Dendritic cell treated with granulocyte-macrophage colony-stimulating factor and Interleukin-4, amounts not matched to agents 40 ng/mL and 50 ng/mL, for 4 days (primary cell): ENCODE measurements at regions of chr6 and their contacts with region 1.

Region 1: GRCh38 chr6:27518881-27519795 is 46.2 kb upstream of the ZNF184 start:
- H3K4me3 Mint-ChIP-seq: peak overlapping the region; percentile 82
- H3K27ac Mint-ChIP-seq: peak overlapping the region; percentile 81
- H3K4me1 Mint-ChIP-seq: no peaks in the 10 kb centered on the region
- H3K27me3 Mint-ChIP-seq: peaks cover 33% of the 10 kb centered on the region

Region 2: DNA sequence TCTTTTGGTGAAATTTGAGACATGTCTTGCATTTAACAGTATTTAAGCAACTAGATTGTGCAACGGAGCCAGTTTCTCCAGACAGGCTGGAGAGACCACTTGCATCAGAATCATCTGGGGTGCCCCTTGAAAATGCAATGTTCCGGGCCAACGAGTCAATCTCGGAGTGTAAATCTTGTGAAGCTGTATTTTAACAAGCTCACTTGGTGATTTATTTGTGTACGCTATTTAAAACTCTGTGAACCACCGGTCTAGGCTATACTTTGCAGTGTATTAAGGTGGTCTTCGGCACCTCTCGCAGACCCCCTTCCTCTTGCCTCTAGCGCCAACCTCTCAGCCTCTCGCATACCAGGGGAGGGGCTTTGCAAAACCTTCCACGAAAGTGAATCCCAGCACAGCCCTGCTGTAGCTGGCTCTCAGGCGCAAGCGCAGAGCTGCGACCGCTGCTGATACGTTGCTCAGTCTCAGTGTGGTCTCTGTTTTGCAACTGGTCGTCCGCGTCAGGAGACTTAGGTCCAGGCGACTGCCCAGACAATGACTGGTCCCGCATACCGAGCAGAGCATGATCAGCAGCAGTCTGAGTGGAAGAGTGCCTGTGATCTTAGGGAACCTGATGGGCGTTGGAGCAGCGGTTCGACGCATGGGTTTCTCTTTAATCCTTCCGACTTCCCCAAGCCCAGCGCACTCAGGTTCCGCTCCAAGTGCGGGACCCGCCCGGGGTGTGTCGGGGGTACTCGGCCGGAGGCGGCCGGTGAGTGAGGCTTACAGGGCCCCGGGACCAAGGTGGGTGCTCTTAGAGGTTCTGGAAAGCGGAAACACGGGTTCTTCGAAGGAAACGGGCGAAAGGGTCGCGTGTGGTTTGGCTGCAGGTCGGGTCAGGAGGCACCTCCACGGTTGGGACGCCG is 130.6 kb before region 1 on chr6 and contains the start of gene ZNF391:
- intact Hi-C with region 1: no loop called
- H3K4me3 Mint-ChIP-seq: peak within 1 kb of the TSS; percentile 98
- H3K27ac Mint-ChIP-seq: peak within 1 kb of the TSS; percentile 86
- H3K4me1 Mint-ChIP-seq: peaks cover 13% of the 10 kb centered on the region
- H3K27me3 Mint-ChIP-seq: peaks cover 15% of the 10 kb centered on the region

Region 3: DNA sequence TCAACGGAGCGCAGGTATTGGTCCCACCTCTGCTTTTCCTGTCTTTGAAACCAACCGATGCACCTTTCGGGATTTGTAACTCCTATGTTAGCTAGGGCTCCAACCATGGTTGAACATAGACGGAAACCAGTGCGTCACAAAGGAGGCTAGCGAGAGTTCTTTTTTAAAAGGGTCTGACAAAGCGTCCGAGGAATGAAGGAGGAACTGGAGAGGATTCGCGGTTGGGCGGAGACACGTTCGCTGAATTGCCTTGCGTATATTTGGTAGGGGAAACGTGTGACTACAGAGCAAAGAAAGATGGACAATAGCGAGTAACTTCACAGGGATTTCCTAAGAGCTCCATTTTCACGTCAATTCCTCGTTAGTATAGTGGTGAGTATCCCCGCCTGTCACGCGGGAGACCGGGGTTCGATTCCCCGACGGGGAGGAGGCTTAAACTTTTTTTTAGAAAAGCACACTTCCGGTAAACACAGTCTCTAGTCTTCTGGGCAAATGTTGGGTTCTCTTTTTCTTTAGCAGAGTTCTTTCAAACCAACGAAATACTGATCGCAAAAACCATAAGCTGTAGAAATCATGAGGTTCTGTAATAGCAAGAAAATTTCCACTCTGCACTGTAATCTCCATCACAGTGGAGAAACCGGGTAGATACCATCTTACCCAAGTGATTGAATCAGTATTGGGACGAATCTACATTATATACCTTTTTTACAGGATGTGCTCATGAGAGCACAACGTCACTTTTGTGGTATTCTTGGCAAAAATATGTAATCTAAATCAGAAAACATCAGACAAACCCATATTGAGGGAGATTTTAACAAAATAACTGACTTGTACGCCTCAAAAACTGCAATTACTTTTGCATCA is 39.6 kb before region 1 on chr6:
- intact Hi-C with region 1: loop called (anchors 2 kb)
- H3K4me3 Mint-ChIP-seq: no peak overlapping the region
- H3K27ac Mint-ChIP-seq: no peak overlapping the region
- H3K4me1 Mint-ChIP-seq: no peaks in the 10 kb centered on the region
- H3K27me3 Mint-ChIP-seq: peaks cover 6% of the 10 kb centered on the region

Region 4: GRCh38 chr6:27795697-27796494 is 276.8 kb after region 1 on chr6:
- intact Hi-C with region 1: loop called (anchors 1 kb)
- H3K4me3 Mint-ChIP-seq: no peak overlapping the region
- H3K27ac Mint-ChIP-seq: no peak overlapping the region
- H3K4me1 Mint-ChIP-seq: peaks cover 15% of the 10 kb centered on the region
- H3K27me3 Mint-ChIP-seq: peaks cover 14% of the 10 kb centered on the region